CD14-positive monocyte (primary cell): ENCODE measurements at regions of chr19 and their contacts with region 1.

Region 1: GRCh38 chr19:41449079-41449864 is 6.3 kb downstream of the ERICH4 start:
- DNase-seq: peak; percentile 64 to 75 (median 69)
- H3K4me3 ChIP-seq: peak overlapping the region in 1 of 3 experiments; percentile 62
- H3K4me3 Mint-ChIP-seq: peak overlapping the region; percentile 67 to 76
- H3K27ac ChIP-seq: no peak overlapping the region
- H3K27ac Mint-ChIP-seq: no peak overlapping the region
- H3K4me1 ChIP-seq: peaks cover 15 to 16% of the 10 kb centered on the region in 2 donors
- H3K4me1 Mint-ChIP-seq: peaks cover 17% of the 10 kb centered on the region
- H3K27me3 ChIP-seq: peaks cover 0 to 6% of the 10 kb centered on the region in 2 donors
- H3K27me3 Mint-ChIP-seq: peaks cover 14 to 31% (median 30%) of the 10 kb centered on the region in 3 donors
- CTCF ChIP-seq: peak; percentile 98

Region 2: GRCh38 chr19:41531438-41532311 is 82.4 kb after region 1 on chr19:
- intact Hi-C with region 1: loop called (anchors 1 to 10 kb)
- DNase-seq: peak; percentile 97 to 99 (median 98)
- H3K4me3 ChIP-seq: peak overlapping the region in 2 of 3 experiments; percentile 43 to 64
- H3K4me3 Mint-ChIP-seq: peak overlapping the region; percentile 54 to 86
- H3K27ac ChIP-seq: peak overlapping the region; percentile 69 to 92
- H3K27ac Mint-ChIP-seq: peak overlapping the region; percentile 97 to 99 (median 99)
- H3K4me1 ChIP-seq: peaks cover 64 to 79% of the 10 kb centered on the region in 2 donors
- H3K4me1 Mint-ChIP-seq: peaks cover 66% of the 10 kb centered on the region
- H3K27me3 ChIP-seq: no peaks in the 10 kb centered on the region
- H3K27me3 Mint-ChIP-seq: peaks cover 0 to 6% (median 4%) of the 10 kb centered on the region in 3 donors
- CTCF ChIP-seq: no peak

Region 3: DNA sequence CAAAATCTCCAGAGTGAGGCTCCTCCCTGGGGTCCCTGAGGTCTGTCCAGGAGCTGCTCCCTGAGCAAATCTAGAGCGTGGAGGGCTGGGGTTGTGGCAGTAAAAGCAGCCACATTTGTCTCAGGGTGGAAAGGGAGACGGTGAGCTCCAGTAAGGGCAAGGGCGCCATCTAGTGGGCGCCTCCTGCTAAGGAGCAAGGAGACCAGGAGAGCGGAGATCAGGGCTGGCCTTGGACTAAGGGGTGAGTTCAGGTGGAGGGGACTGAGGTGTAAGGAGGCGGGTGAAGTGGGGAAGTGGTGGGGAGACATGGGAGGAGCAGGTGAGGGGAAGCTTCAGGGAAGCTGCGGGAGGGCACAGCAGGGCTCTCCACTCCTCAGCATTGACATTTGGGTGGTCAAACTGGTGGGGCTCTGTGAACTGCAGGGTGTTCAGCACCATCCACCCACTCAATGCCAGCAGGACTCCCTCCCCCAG is 121.4 kb after region 1 on chr19:
- intact Hi-C with region 1: loop called (anchors 1 to 2 kb)
- DNase-seq: peak; percentile 81 to 84 (median 81)
- H3K4me3 ChIP-seq: no peak overlapping the region
- H3K4me3 Mint-ChIP-seq: no peak overlapping the region
- H3K27ac ChIP-seq: no peak overlapping the region
- H3K27ac Mint-ChIP-seq: peak overlapping the region in 1 of 7 donors; percentile 41
- H3K4me1 ChIP-seq: peaks cover 6 to 7% of the 10 kb centered on the region in 2 donors
- H3K4me1 Mint-ChIP-seq: peaks cover 8% of the 10 kb centered on the region
- H3K27me3 ChIP-seq: peaks cover 5 to 20% of the 10 kb centered on the region in 2 donors
- H3K27me3 Mint-ChIP-seq: peaks cover 13 to 23% (median 13%) of the 10 kb centered on the region in 3 donors
- CTCF ChIP-seq: peak; percentile 92